AG04449 (cell line): ENCODE measurements at regions of chr2 and their contacts with region 1.

Region 1: GRCh38 chr2:11583840-11584524 is 50.1 kb downstream of the GREB1 start:
- DNase-seq: peak; percentile 83
- H3K4me3 ChIP-seq: no peak overlapping the region
- CTCF ChIP-seq: peak; percentile 91

Region 2: DNA sequence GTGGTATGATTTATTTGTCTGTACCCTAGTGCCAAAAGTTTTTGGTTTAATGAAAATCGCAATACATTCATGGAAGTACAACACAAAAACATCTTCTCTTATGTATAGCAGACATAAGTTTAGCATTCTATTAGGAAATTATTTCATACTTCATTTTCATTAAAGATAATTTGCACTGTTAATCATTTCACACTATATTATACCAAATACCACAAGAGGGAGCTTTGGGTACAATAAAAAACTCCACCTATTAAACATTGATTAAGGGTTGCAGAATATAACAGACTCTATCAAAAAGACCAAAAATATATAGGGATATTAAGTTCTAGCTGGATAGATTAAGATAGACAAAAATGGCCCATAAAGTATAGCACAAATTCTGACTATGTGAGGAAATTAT is 349.7 kb before region 1 on chr2:
- CTCF ChIA-PET with region 1: interaction called, 13 read pairs
- POLR2A ChIA-PET with region 1: no interaction called
- DNase-seq: no peak
- H3K4me3 ChIP-seq: no peak overlapping the region
- CTCF ChIP-seq: peak; percentile 14

Region 3: DNA sequence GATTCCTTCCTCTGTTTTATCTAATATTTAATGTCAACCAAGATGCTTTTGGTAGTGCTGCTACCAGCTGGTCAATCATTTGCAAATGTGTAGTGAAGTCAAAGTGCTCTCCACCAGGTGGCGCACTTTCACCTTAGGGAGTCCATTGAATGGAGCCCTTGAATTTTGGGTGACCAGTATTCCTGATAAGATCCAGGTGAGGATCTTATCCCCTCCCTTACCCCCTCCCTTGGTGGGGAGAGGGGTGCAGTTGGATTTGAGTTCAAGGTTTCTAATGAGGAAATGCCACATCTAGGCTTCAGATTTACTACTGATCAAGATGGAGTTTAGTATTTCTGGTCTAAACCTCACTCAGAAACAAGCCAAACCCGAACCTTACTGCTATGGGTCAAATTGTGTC is 106.0 kb before region 1 on chr2:
- CTCF ChIA-PET with region 1: interaction called, 409 read pairs
- POLR2A ChIA-PET with region 1: no interaction called
- DNase-seq: peak; percentile 40
- H3K4me3 ChIP-seq: no peak overlapping the region
- CTCF ChIP-seq: peak; percentile 74

Region 4: GRCh38 chr2:11547912-11548497 is 36.0 kb before region 1 on chr2:
- CTCF ChIA-PET with region 1: interaction called, 14 read pairs
- POLR2A ChIA-PET with region 1: no interaction called
- DNase-seq: no peak
- H3K4me3 ChIP-seq: no peak overlapping the region
- CTCF ChIP-seq: no peak

Region 5: GRCh38 chr2:11602563-11603204 is 18.7 kb after region 1 on chr2:
- CTCF ChIA-PET with region 1: interaction called, 36 read pairs
- POLR2A ChIA-PET with region 1: no interaction called
- DNase-seq: no peak
- H3K4me3 ChIP-seq: no peak overlapping the region
- CTCF ChIP-seq: no peak

Region 6: DNA sequence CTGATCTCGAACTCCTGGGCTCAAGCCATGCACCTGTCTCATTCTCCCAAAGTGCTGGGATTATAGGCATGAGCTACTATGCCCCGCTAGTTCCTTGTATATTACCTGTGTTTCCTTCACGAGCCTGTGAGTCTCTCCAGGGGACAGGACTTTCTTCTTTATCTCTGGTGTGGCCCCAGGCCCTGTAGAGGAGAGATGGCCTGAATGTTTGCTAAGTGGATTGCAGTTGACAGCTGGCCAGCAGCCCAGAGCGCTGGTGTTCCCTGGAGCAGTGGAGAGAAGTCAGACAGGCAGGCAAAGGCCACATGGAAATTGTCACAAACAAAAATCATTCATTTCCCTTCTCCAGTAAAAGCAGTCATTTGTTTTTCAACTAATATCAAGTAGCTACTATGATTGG is 180.4 kb after region 1 on chr2:
- CTCF ChIA-PET with region 1: no interaction called
- POLR2A ChIA-PET with region 1: no interaction called
- DNase-seq: no peak
- H3K4me3 ChIP-seq: no peak overlapping the region
- CTCF ChIP-seq: no peak

Region 7: DNA sequence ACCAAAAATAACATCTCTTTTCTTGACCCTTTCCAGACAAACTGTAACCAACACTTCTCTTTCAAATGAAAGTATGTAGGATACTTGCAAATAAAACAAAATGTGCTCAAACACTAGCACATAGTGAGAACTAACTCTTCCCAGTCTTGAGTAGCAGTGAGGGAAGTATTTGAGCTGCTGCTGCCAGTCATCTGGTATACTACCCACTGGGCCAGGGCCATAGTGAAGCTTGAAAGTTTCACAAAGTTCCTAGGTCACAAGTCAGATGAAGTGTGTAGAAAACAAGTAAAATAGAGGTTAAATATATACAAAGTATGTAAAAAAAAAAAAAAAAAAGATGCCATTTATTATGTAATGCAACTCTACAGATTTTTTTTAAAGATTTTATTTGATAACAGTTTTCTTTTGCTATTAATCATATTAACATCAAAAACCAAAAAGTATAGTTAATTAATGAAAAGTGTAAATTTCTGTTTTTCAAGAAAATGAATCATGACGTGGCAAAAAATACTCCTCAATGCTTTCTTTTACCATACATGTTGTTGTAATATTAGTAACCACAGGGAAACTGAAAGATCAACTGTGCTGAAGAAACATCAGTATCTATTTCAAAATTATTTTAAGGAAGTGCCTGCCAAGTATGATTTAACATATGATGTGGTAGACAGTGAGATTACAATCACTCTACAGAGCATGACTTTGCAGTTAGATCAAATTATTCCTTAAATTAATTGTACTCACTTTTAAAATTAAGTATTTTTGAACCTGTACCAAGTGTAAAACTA is 1111.2 kb after region 1 on chr2:
- CTCF ChIA-PET with region 1: no interaction called
- POLR2A ChIA-PET with region 1: no interaction called
- DNase-seq: no peak
- H3K4me3 ChIP-seq: no peak overlapping the region
- CTCF ChIP-seq: no peak